GM13976 (cell line): ENCODE measurements at regions of chr12 and their contacts with region 1.

Region 1: DNA sequence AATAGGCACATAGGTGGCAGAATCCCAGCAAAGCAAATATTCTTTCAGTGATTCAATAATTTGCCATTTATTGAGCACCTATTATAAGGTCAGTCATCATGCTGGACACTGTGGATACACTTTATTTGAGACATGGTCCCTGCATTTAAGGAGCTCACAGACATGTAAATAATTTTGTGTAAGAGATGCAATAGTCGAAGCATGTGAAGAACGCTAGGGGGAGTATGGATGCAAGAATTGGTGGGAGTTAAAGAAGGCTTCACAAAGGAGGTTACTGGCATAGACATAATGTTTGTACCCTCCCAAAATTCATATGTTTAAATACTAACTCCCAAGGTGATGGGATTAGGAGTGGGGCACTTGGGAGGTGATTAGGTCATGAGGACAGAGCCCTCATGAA is 260.6 kb upstream of the GARIN6 start:
- DNase-seq: peak; percentile 37
- CTCF ChIP-seq: peak; percentile 45

Region 2: GRCh38 chr12:99043319-99043914 is 343.5 kb before region 1 on chr12:
- in situ Hi-C with region 1: loop called (anchors 25 kb)
- DNase-seq: peak; percentile 46
- CTCF ChIP-seq: peak; percentile 83

Region 3: DNA sequence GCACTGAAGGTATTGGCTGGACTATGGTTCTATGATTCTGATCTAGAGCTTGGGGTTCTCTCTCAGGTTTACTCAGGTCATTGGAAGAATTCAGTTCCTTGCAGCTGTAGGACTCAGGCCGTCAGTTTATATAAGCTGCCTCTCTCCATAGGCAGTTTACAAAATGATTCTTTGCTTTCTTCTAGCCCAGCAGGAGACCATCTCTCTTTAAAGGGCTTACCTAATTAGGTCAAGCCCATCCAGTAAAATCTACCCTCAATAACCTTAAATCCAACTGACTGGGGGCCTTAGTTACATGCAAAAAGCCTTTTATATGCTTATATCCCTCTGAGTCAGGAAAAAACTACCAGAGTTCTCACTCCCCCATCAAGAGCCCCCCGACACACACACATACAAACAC is 180.2 kb after region 1 on chr12:
- in situ Hi-C with region 1: no loop called
- DNase-seq: no peak
- CTCF ChIP-seq: no peak

Region 4: GRCh38 chr12:99619389-99620158 is 232.7 kb after region 1 on chr12:
- in situ Hi-C with region 1: loop called (anchors 10 kb)
- DNase-seq: no peak
- CTCF ChIP-seq: peak; percentile 86

Region 5: DNA sequence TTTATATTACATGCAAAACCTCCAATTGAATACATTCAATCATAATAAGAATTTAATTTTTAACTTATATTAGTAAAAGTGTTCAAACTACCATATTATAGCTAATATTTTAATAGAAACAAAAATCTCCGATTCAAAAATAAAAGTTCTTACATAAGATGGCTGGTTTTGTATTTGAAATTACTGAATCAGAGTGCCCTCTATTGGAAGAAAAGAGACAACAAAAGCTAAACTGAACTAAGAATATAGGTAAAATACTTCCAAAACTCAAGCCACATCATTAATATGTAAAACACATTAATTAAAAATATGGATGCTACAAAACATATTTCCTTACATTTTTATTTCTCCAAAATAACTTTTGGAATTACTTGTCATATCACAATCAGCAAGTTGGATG is 380.9 kb after region 1 on chr12:
- in situ Hi-C with region 1: loop called (anchors 10 kb)
- DNase-seq: no peak
- CTCF ChIP-seq: peak; percentile 22

Region 6: GRCh38 chr12:100020370-100020769 is 633.5 kb after region 1 on chr12:
- in situ Hi-C with region 1: no loop called
- DNase-seq: no peak
- CTCF ChIP-seq: no peak